ENCODE measurements at regions of chr9 and their contacts with region 1.

Region 1: DNA sequence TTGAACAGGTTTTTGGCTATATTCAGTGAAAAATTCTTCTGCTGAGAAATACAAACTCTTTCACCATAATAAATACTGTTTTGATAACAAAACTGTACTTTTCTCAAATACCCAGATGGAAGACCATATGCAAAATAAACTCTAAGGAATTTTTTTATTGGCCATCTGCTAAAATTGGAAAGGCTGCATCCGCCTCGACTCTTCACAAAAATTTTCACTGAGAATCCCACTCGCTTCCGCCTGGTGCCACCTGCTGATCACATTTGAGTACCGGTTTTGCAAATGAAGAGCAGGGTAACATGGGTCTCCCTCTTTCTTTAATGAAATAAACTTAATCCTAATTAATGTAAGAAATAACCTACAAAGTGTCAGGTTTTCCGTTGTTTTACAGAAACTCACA is 76.4 kb downstream of the TTLL11 start:
- DNase-seq: no peak
- ATAC-seq: no peak
- H3K4me3 ChIP-seq: no peak overlapping the region
- H3K4me3 Mint-ChIP-seq: no peak overlapping the region
- H3K27ac ChIP-seq: no peak overlapping the region
- H3K27ac Mint-ChIP-seq: no peak overlapping the region
- H3K4me1 ChIP-seq: no peaks in the 10 kb centered on the region
- H3K4me1 Mint-ChIP-seq: no peaks in the 10 kb centered on the region
- H3K27me3 ChIP-seq: peaks cover 0 to 2% (median 0%) of the 10 kb centered on the region in 4 experiments
- H3K27me3 Mint-ChIP-seq: peaks cover 9% of the 10 kb centered on the region
- CTCF ChIP-seq: no peak

Region 2: DNA sequence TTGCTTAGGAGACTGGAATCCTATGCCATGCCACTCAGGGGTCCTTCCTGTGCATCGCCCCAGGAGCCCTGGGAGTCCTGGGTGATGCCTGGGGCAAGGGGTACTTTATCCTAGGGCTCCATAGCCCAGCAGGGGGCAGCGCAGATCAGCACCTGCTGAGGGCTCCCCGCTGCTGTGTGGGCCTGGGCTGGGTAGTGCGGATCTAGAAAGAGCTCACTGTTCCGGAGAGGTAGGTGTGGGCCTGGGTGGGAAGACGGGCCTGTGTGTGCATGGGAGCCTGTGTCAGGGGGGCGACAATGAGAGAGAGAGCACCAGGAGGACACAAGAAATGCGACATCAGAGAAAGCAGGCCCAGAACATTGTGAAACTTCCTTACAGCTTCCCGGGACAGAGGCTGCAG is 376.7 kb before region 1 on chr9:
- CTCF ChIA-PET with region 1: interaction called, 3 read pairs
- POLR2A ChIA-PET with region 1: no interaction called
- intact Hi-C with region 1: loop called (anchors 2 kb)
- DNase-seq: no peak
- ATAC-seq: no peak
- H3K4me3 ChIP-seq: no peak overlapping the region
- H3K4me3 Mint-ChIP-seq: no peak overlapping the region
- H3K27ac ChIP-seq: no peak overlapping the region
- H3K27ac Mint-ChIP-seq: no peak overlapping the region
- H3K4me1 ChIP-seq: no peaks in the 10 kb centered on the region
- H3K4me1 Mint-ChIP-seq: no peaks in the 10 kb centered on the region
- H3K27me3 ChIP-seq: no peaks in the 10 kb centered on the region
- H3K27me3 Mint-ChIP-seq: peaks cover 31% of the 10 kb centered on the region
- CTCF ChIP-seq: peak; percentile 33

Region 3: GRCh38 chr9:121686930-121687541 is 329.7 kb before region 1 on chr9:
- CTCF ChIA-PET with region 1: interaction called, 12 read pairs
- POLR2A ChIA-PET with region 1: no interaction called
- intact Hi-C with region 1: loop called (anchors 1 kb)
- DNase-seq: peak; percentile 64
- ATAC-seq: peak; percentile 88
- H3K4me3 ChIP-seq: no peak overlapping the region
- H3K4me3 Mint-ChIP-seq: no peak overlapping the region
- H3K27ac ChIP-seq: no peak overlapping the region
- H3K27ac Mint-ChIP-seq: no peak overlapping the region
- H3K4me1 ChIP-seq: no peaks in the 10 kb centered on the region
- H3K4me1 Mint-ChIP-seq: no peaks in the 10 kb centered on the region
- H3K27me3 ChIP-seq: peaks cover 0 to 11% (median 0%) of the 10 kb centered on the region in 4 experiments
- H3K27me3 Mint-ChIP-seq: peaks cover 18% of the 10 kb centered on the region
- CTCF ChIP-seq: peak; percentile 74